ENCODE measurements at regions of chr7 and their contacts with region 1.

Region 1: GRCh38 chr7:2978403-2978802 is 65.3 kb downstream of the CARD11 start:
- DNase-seq: peak; percentile 82
- ATAC-seq: peak; percentile 84
- H3K4me3 Mint-ChIP-seq: peak overlapping the region; percentile 83
- H3K27ac Mint-ChIP-seq: peak overlapping the region; percentile 95
- H3K4me1 Mint-ChIP-seq: peaks cover 83% of the 10 kb centered on the region
- H3K27me3 Mint-ChIP-seq: no peaks in the 10 kb centered on the region
- CTCF ChIP-seq: no peak

Region 2: DNA sequence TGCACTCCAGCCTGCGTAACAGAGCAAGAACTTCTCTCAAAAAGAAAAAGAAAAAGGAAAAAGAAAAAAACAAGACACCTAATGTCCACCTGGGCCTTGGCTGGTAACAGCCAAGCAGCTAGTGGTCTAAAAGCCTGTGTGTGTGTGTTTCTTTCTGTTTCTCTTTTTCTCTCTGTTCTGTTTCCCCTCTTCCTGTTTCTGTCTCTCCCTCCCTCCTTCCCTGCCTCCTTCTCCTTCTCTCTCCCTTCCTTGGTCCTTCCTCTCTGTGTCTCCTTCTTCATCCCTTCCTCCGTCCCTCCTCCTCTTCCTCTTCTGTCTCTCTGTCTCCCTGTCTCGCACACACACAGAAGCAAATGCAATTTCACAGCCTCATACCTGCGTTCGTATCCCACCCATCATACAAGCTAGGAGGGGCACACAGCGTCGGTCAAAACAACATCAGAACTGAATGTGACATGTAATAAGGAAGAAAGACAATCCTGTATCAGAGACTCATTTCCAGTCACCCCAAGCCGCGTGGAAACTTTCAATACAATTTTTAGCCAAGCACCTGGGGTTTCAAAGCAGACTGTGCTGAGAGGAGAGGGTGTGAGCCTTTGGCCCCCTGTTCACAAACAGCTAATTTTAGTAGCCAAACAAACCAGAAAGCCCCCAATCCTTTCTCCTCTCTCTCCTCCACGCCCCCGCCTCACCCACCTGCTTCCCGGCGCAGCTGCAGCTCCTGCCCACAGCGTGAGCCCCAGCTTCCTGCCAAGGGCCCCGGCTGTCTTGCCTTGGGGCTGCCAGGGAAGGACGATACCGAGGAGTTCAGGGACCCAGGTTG is 84.1 kb before region 1 on chr7:
- CTCF ChIA-PET with region 1: no interaction called
- POLR2A ChIA-PET with region 1: no interaction called
- intact Hi-C with region 1: loop called (anchors 5 kb)
- DNase-seq: peak; percentile 35
- ATAC-seq: peak; percentile 67
- H3K4me3 Mint-ChIP-seq: peak overlapping the region; percentile 75
- H3K27ac Mint-ChIP-seq: peak overlapping the region; percentile 74
- H3K4me1 Mint-ChIP-seq: peaks cover 34% of the 10 kb centered on the region
- H3K27me3 Mint-ChIP-seq: no peaks in the 10 kb centered on the region
- CTCF ChIP-seq: no peak

Region 3: DNA sequence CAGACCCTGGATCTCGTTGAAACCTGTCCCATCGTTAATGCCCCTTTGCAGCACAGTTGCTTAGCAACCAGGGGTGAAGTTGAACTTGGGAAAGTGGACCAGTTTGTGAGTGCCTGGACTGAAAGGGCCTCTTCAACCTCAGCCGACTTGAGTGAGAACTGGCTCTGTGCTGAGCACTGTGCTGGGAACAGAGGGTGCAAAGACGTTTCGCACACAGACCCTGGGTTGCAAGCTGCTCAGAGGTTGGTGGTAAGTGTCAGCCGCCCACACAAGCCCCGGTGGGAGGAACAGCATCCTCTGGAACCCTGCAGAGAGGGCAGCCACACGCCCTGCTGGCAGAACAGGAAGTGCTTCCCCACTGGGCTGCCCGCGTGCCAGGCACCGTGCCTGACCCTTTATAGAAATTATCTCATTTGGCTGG is 24.0 kb before region 1 on chr7:
- CTCF ChIA-PET with region 1: no interaction called
- POLR2A ChIA-PET with region 1: interaction called, 3 read pairs
- intact Hi-C with region 1: loop called (anchors 1 kb)
- DNase-seq: no peak
- ATAC-seq: peak; percentile 53
- H3K4me3 Mint-ChIP-seq: peak overlapping the region; percentile 19
- H3K27ac Mint-ChIP-seq: peak overlapping the region; percentile 70
- H3K4me1 Mint-ChIP-seq: peaks cover 63% of the 10 kb centered on the region
- H3K27me3 Mint-ChIP-seq: no peaks in the 10 kb centered on the region
- CTCF ChIP-seq: no peak

Region 4: DNA sequence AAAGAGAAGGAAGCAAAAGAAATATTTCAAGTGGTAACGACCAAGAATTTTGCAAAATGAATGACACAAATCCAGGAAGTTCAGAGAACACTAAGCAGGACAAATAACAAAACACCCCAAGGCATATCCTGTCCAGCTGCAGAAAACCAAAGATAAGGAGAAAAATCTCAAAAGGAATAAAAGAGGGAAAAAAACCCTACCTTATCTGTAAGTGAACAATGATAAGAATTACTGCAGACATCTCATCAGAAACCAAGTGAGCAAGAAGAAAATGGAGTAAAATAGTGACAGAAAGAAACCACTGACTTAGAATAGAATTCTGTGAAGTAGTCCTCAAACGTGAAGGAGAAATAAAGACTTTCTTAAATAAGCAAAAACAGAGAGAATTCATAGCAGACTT is 43.4 kb after region 1 on chr7:
- CTCF ChIA-PET with region 1: no interaction called
- POLR2A ChIA-PET with region 1: interaction called, 3 read pairs
- intact Hi-C with region 1: loop called (anchors 5 kb)
- DNase-seq: no peak
- ATAC-seq: no peak
- H3K4me3 Mint-ChIP-seq: no peak overlapping the region
- H3K27ac Mint-ChIP-seq: peak overlapping the region; percentile 25
- H3K4me1 Mint-ChIP-seq: peaks cover 28% of the 10 kb centered on the region
- H3K27me3 Mint-ChIP-seq: no peaks in the 10 kb centered on the region
- CTCF ChIP-seq: no peak

Region 5: DNA sequence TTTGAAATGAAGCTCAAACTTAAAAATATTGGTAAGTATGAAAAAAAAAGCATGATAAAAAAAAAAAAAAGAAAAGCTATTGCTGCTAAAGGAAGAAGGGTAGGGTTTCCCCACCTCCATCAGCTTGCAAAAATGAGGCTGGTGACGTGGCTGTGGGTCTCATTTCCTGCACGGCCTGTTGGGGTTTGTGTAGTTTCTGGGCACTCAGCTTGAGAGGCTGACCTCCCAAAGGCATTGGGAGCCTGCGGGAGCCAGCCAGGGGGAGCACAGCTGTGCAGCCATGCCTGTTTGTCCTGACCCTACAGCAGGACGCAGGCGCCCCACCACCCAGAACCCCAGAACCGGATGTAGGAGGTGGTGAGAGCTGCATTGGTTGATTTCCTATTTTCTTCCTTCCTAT is 114.1 kb after region 1 on chr7:
- CTCF ChIA-PET with region 1: interaction called, 3 read pairs
- POLR2A ChIA-PET with region 1: interaction called, 8 read pairs
- intact Hi-C with region 1: loop called (anchors 1 kb)
- DNase-seq: peak; percentile 54
- ATAC-seq: peak; percentile 84
- H3K4me3 Mint-ChIP-seq: peak overlapping the region; percentile 15
- H3K27ac Mint-ChIP-seq: peak overlapping the region; percentile 83
- H3K4me1 Mint-ChIP-seq: peaks cover 52% of the 10 kb centered on the region
- H3K27me3 Mint-ChIP-seq: no peaks in the 10 kb centered on the region
- CTCF ChIP-seq: no peak

Region 6: DNA sequence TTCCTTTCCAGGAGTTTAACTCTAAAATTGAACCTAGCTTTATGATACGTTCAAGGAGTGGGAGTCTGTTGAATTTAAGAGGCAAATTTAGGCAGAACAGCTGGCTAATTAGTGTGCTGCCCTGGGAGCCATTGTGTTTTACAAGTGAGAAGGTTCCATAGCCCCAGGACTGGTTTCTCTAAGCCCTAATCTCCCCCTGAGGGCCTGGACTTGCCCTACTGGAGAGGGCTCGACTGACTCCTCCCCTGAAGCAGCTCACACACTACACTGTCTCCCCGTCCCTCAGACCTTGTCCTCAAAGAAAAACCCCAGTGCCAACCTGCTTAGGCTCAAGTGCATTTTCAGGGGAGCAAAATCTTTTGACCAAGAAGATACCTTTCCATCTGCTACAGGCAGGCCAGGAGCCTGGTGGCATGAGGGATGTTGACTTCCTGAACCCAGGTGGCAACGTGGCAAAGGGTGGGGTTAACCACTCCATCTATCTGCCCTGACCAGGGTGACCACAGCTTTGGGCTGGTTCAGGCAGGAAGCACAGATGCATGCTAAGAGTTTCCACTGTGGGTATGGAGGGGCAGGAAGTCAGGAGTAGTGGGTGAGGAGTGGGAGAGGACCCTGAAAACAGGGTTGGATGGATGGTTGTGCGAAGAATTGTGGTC is 134.2 kb after region 1 on chr7:
- CTCF ChIA-PET with region 1: no interaction called
- POLR2A ChIA-PET with region 1: no interaction called
- intact Hi-C with region 1: no loop called
- DNase-seq: no peak
- ATAC-seq: no peak
- H3K4me3 Mint-ChIP-seq: no peak overlapping the region
- H3K27ac Mint-ChIP-seq: no peak overlapping the region
- H3K4me1 Mint-ChIP-seq: peaks cover 4% of the 10 kb centered on the region
- H3K27me3 Mint-ChIP-seq: peaks cover 19% of the 10 kb centered on the region
- CTCF ChIP-seq: no peak

Measured in activated B cell treated with CpG ODN at 0.5 μM for 24 hours (primary cell).